ENCODE measurements at regions of chr1 and their contacts with region 1.

Region 1: DNA sequence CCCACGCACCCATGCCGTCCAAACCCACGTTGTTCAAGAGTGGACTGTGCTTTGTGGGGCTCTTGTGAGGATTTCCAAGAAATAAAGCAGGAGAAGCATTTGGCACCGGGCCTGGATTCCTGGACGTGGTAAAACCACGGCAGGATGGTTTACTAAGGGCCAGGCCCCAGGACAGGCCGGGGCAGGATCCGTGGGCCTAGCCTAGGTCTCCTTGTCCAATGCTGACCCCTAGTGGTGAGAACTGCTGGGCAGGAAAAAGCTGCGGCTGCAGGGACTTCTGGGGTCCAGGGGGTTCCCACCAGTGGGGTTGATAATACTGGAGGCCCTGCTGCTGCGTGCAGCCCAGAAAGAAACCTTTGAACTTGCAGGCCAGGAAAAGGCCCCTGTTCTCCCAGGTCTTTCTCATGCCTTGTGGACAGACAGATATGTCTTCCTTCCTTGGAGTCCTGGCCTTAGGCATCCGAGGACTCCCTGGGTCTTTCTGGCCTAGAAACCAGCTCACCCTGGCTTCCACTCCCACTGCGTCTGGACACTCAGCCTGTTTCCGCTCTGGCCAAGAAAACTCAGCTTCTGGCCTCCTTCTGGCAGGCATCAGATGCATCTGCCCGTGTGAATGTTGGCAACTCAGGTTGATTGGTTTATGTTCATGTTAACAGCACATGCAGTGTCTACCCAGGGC is 106.9 kb upstream of the TMEM51 start:
- DNase-seq: no peak
- H3K4me3 ChIP-seq: no peak overlapping the region
- H3K27ac ChIP-seq: no peak overlapping the region
- H3K4me1 ChIP-seq: peaks cover 0 to 7% (median 2%) of the 10 kb centered on the region in 4 donors
- H3K27me3 ChIP-seq: no peaks in the 10 kb centered on the region
- CTCF ChIP-seq: peak; percentile 82 to 94 (median 87)
- EP300 ChIP-seq: no peak
- POLR2A ChIP-seq: no peak

Region 2: GRCh38 chr1:13960375-13960987 is 1086.1 kb before region 1 on chr1:
- intact Hi-C with region 1: loop called (anchors 10 kb)
- DNase-seq: no peak
- H3K4me3 ChIP-seq: no peak overlapping the region
- H3K27ac ChIP-seq: no peak overlapping the region
- H3K4me1 ChIP-seq: no peaks in the 10 kb centered on the region
- H3K27me3 ChIP-seq: peaks cover 0 to 18% (median 0%) of the 10 kb centered on the region in 4 donors
- CTCF ChIP-seq: peak in 2 of 3 experiments; percentile 93 to 97
- EP300 ChIP-seq: no peak
- POLR2A ChIP-seq: no peak

Region 3: DNA sequence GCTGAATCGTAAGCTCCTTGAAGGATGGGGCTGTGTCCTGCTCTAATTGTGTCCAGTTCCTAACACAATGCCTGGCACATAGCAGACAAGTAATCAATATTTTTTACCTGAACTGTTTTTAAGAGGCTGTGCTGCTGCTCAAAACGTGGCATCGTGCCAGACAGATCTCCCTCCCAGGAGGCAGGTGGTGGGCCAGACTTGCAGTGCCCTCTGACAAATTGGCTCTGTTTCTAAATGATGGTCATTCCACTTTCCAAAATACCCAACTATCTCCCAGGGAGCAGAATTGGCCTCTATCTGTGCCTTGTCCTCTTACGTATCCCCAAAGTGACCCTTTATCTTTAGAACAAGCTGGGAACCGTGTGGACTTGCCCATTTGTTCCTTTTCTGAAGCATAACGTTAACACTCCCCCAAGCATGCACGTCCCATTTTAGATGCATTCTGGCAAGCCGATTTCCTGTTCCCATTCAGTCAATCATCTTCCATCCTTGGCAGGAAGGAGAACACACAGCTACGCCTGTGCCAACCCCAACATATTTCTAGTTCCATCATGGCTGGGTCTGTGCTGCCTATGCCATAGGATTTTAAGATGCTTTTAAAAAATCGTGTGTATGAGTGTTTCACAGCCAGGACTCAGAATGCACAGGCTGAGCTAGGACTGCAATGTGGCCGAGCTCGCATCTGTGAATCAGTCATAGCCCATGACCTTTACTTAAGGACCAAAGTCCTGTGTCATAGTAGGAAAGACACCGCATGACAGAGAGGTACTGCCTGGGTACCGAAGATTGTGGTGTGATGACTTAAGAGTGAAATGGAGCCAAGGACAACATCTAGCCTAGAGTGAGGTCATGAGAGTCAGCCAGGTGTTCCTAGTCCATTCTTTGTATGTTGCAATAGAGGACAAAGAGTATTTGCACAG is 938.0 kb before region 1 on chr1:
- intact Hi-C with region 1: loop called (anchors 10 kb)
- DNase-seq: peak; percentile 91
- H3K4me3 ChIP-seq: no peak overlapping the region
- H3K27ac ChIP-seq: peak overlapping the region in 3 of 4 donors; percentile 34 to 57 (median 52)
- H3K4me1 ChIP-seq: peaks cover 0 to 21% (median 20%) of the 10 kb centered on the region in 4 donors
- H3K27me3 ChIP-seq: peaks cover 0 to 6% (median 0%) of the 10 kb centered on the region in 4 donors
- CTCF ChIP-seq: no peak
- EP300 ChIP-seq: no peak
- POLR2A ChIP-seq: no peak

Region 4: GRCh38 chr1:14778898-14779865 is 267.4 kb before region 1 on chr1:
- intact Hi-C with region 1: loop called (anchors 2 kb)
- DNase-seq: no peak
- H3K4me3 ChIP-seq: no peak overlapping the region
- H3K27ac ChIP-seq: no peak overlapping the region
- H3K4me1 ChIP-seq: no peaks in the 10 kb centered on the region
- H3K27me3 ChIP-seq: no peaks in the 10 kb centered on the region
- CTCF ChIP-seq: peak; percentile 42 to 69 (median 47)
- EP300 ChIP-seq: no peak
- POLR2A ChIP-seq: no peak

Region 5: GRCh38 chr1:14875524-14876509 is 170.8 kb before region 1 on chr1:
- intact Hi-C with region 1: no loop called
- DNase-seq: no peak
- H3K4me3 ChIP-seq: no peak overlapping the region
- H3K27ac ChIP-seq: no peak overlapping the region
- H3K4me1 ChIP-seq: no peaks in the 10 kb centered on the region
- H3K27me3 ChIP-seq: peaks cover 0 to 23% (median 0%) of the 10 kb centered on the region in 4 donors
- CTCF ChIP-seq: no peak
- EP300 ChIP-seq: no peak
- POLR2A ChIP-seq: no peak